CD4-positive, alpha-beta memory T cell (primary cell): ENCODE measurements at regions of chr7 and their contacts with region 1.

Region 1: GRCh38 chr7:151304856-151305255 is 36.8 kb upstream of the NUB1 start:
- DNase-seq: no peak
- H3K4me3 ChIP-seq: no peak overlapping the region
- H3K4me3 Mint-ChIP-seq: peak overlapping the region in 6 of 8 donors; percentile 35 to 71 (median 56)
- H3K27ac ChIP-seq: no peak overlapping the region
- H3K27ac Mint-ChIP-seq: peak overlapping the region in 2 of 7 donors; percentile 41 to 69
- H3K4me1 ChIP-seq: peaks cover 5% of the 10 kb centered on the region
- H3K4me1 Mint-ChIP-seq: peaks cover 3 to 12% (median 8%) of the 10 kb centered on the region in 4 donors
- H3K27me3 ChIP-seq: peaks cover 7% of the 10 kb centered on the region
- H3K27me3 Mint-ChIP-seq: peaks cover 23 to 31% of the 10 kb centered on the region in 2 donors

Region 2: DNA sequence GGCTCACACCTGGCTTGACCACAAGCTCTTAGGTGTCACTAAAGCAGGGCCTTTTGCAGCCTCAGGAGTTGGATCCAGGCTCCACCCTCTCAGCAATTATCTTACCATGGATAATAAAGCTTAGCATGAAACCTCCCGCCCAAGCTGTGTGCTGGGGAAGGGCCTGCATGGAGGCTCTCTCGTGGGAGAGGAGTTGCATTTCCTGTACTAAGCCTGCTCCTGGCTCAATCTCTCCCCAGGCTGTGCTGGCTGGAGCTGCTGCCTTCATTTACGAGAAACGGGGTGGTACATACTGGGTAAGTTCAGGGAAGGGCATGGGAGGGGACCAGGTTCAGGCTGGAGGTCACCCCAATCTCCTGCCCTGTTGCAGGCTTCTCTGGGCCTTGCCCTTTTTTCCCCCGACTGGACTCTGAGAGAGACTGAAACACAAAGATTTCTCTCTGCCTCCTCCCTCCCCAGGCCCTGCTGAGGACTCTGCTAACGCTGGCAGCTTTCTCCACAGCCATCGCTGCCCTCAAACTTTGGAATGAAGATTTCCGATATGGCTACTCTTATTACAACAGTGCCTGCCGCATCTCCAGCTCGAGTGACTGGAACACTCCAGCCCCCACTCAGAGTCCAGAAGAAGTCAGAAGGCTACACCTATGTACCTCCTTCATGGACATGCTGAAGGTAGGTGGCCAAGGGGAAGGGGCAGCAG is 501.5 kb before region 1 on chr7:
- CTCF ChIA-PET with region 1: no interaction called
- POLR2A ChIA-PET with region 1: no interaction called
- intact Hi-C with region 1: no loop called
- DNase-seq: no peak
- H3K4me3 ChIP-seq: no peak overlapping the region
- H3K4me3 Mint-ChIP-seq: peak overlapping the region in 2 of 8 donors; percentile 7 to 24
- H3K27ac ChIP-seq: no peak overlapping the region
- H3K27ac Mint-ChIP-seq: no peak overlapping the region
- H3K4me1 ChIP-seq: peaks cover 14% of the 10 kb centered on the region
- H3K4me1 Mint-ChIP-seq: peaks cover 2 to 14% (median 4%) of the 10 kb centered on the region in 4 donors
- H3K27me3 ChIP-seq: peaks cover 33% of the 10 kb centered on the region
- H3K27me3 Mint-ChIP-seq: peaks cover 38 to 41% of the 10 kb centered on the region in 2 donors

Region 3: DNA sequence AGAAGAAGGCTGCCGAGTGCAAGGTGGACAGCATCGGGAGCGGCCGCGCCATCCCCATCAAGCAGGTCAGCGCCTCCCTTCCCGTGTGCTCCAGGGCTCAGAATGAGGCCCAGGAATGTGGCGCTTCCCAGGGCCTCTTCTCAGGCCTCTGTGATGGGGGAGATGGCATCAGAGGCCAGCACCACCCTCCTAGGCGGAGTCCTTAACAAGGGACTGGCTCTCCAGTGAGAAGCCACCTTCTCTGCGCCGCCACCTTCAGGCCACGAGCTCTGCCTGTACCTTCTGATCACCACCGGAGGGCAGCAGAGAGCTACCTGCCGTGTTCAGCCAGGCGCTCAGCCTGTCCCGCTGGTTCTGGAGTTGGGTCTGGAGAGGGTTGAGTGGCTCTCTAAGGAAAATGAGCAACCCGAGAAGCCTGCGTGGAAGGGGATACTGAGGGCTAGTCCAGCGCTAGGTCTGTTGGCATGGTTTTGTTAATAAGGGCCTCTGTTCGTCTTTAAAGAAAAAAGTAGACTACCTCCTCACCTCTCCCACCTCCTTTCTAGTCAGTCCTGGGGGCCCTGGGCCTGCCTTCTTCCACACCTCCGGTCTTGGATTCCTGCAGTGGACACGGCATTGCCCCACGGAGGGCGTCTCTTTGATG is 180.9 kb before region 1 on chr7:
- CTCF ChIA-PET with region 1: interaction called, 12 read pairs
- POLR2A ChIA-PET with region 1: no interaction called
- intact Hi-C with region 1: no loop called
- DNase-seq: peak; percentile 73 to 82 (median 80)
- H3K4me3 ChIP-seq: no peak overlapping the region
- H3K4me3 Mint-ChIP-seq: no peak overlapping the region
- H3K27ac ChIP-seq: no peak overlapping the region
- H3K27ac Mint-ChIP-seq: peak overlapping the region in 3 of 7 donors; percentile 31 to 70 (median 47)
- H3K4me1 ChIP-seq: peaks cover 4% of the 10 kb centered on the region
- H3K4me1 Mint-ChIP-seq: peaks cover 4 to 19% (median 10%) of the 10 kb centered on the region in 4 donors
- H3K27me3 ChIP-seq: no peaks in the 10 kb centered on the region
- H3K27me3 Mint-ChIP-seq: no peaks in the 10 kb centered on the region